Gastrocnemius medialis (tissue), 4 donors: ENCODE measurements at regions of chr15 and their contacts with region 1.

Region 1: DNA sequence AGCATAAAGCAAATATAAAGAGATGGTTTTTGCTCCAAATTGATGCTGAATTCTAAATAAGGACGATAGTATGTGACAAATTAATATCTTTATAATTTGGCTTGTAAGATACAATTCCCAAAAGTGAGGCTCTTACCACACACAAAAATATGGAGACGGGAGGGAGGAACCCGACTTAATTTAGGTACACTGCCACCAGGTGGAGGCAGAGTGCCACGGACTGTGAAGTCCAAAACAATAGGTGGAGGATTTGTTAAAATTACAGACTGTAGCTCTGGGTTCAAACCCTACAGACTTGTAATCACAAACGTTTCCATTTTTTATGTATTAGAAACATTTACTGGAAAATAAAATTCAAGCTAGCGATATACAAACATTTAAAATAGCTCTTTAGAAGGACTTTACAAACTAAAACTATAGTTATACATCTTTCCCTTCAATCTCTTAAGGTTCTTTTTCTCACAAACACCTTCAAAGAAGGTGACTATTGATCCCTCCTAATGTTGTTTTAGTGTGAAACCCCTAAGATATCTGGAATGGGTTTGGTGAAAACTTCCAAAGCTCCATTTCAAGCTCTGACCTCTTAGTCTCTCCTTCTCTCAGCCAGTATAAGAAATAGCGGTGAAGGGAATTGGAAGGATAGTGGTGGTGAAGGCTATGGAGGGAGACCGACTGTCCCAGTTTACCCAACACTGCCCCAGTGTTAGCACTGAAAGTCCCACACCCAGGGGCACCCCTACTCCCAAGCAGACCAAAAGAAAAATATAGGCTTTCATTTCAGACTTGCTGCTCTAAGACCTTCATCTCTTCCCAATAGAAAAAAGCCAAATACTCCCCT is 89.7 kb downstream of the AQP9 start:
- DNase-seq: peak; percentile 63 to 77
- ATAC-seq: peak; percentile 46 to 59
- H3K4me3 ChIP-seq: no peak overlapping the region
- H3K27ac ChIP-seq: peak overlapping the region; percentile 85 to 92 (median 86)
- H3K4me1 ChIP-seq: peaks cover 27 to 37% of the 10 kb centered on the region in 2 donors
- H3K27me3 ChIP-seq: no peaks in the 10 kb centered on the region
- CTCF ChIP-seq: peak; percentile 78 to 95 (median 87)
- POLR2A ChIP-seq: no peak

Region 2: GRCh38 chr15:58260911-58261267 is 33.0 kb after region 1 on chr15:
- in situ Hi-C with region 1: no loop called
- intact Hi-C with region 1: loop called (anchors 1 kb)
- DNase-seq: peak; percentile 74 to 89
- ATAC-seq: peak; percentile 81 to 82
- H3K4me3 ChIP-seq: no peak overlapping the region
- H3K27ac ChIP-seq: peak overlapping the region; percentile 90 to 96 (median 94)
- H3K4me1 ChIP-seq: peaks cover 40 to 48% of the 10 kb centered on the region in 2 donors
- H3K27me3 ChIP-seq: no peaks in the 10 kb centered on the region
- CTCF ChIP-seq: peak in 1 of 5 experiments; percentile 0
- POLR2A ChIP-seq: no peak

Region 3: GRCh38 chr15:58314593-58315216 is 86.8 kb after region 1 on chr15:
- in situ Hi-C with region 1: no loop called
- intact Hi-C with region 1: no loop called
- DNase-seq: no peak
- ATAC-seq: no peak
- H3K4me3 ChIP-seq: no peak overlapping the region
- H3K27ac ChIP-seq: no peak overlapping the region
- H3K4me1 ChIP-seq: peaks cover 0 to 11% of the 10 kb centered on the region in 2 donors
- H3K27me3 ChIP-seq: no peaks in the 10 kb centered on the region
- CTCF ChIP-seq: no peak
- POLR2A ChIP-seq: no peak

Region 4: DNA sequence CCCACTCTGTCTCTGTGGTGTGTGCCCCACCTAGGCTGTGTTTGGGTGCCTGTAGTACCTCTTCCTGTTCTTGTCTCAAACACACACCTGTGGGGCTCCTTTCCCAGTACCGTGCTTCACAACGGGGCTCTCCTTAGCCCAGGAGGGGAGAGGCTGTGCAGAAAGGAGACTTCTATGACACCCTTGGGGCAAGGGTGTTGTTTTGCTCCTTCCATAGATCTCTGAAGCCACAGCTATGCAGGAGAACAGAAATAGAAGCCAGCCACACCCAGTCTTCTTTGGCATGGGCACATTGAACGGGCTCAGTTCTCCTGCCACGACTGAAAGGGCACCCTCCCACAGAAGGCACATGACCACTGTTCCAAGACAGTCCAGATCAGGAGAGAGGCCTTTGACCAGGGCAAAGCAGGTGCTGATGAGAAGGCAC is 278.2 kb after region 1 on chr15:
- in situ Hi-C with region 1: no loop called
- intact Hi-C with region 1: loop called (anchors 5 kb)
- DNase-seq: peak; percentile 88 to 90
- ATAC-seq: peak; percentile 92 to 94
- H3K4me3 ChIP-seq: no peak overlapping the region
- H3K27ac ChIP-seq: peak overlapping the region; percentile 71 to 82 (median 80)
- H3K4me1 ChIP-seq: peaks cover 19 to 27% of the 10 kb centered on the region in 2 donors
- H3K27me3 ChIP-seq: no peaks in the 10 kb centered on the region
- CTCF ChIP-seq: no peak
- POLR2A ChIP-seq: peak in 1 of 2 donors; percentile 5

Region 5: DNA sequence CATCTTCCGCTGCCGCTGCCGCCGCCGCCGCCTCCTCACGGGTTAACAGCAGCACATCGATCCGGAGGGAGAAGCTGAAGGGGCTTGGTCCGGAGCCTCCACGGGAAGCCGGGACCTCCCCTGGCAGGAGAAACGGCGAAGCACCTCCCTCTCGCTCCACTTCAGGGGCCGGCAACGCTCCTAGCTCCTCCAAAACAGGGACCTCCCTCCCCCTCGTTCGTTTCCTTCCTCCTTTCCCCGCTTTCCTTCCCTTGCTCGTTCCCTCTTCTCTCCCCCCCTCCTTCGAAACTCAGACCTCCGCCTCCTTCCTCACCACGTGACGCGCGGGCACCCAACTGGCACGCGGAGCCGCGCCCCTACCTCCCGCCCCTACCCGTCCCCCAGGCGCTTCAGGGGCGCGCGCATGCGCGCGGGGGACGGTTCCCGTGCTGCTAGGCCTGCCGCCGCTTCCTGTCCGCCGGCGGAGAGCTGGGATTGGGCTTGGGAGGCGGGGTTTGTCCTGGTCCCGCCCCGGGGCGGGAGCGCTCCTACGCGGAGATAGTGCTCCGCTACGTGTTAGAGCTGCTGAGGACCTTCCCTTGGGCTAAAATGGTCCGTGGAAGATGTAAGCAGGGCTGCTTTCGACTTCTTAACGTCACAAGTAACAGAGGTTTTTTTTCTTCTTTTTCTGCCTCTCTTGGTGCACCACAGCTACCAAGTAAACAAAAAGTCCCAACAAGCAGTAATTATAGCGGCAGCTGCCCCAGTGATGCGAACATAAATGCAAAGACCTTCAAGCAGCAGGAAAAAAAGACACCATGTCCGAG is 521.8 kb after region 1 on chr15 and contains the start of gene ADAM10:
- in situ Hi-C with region 1: loop called in 3 of 4 experiments (anchors 10 to 25 kb)
- intact Hi-C with region 1: loop called (anchors 5 kb)
- DNase-seq: peak; percentile 98 to 99
- ATAC-seq: peak; percentile 94 to 95
- H3K4me3 ChIP-seq: peak within 1 kb of the TSS; percentile 75 to 98 (median 85)
- H3K27ac ChIP-seq: peak within 1 kb of the TSS; percentile 89 to 100 (median 96)
- H3K4me1 ChIP-seq: peaks cover 18 to 35% of the 10 kb centered on the region in 2 donors
- H3K27me3 ChIP-seq: no peaks in the 10 kb centered on the region
- CTCF ChIP-seq: peak in 1 of 5 experiments; percentile 10
- POLR2A ChIP-seq: peak; percentile 89 to 97
- total RNA-seq, gene ADAM10: 20.1 to 42.5 (median 33.4) TPM

Region 6: GRCh38 chr15:58933281-58934113 is 705.6 kb after region 1 on chr15 and contains the start of gene SLTM:
- in situ Hi-C with region 1: no loop called
- intact Hi-C with region 1: loop called (anchors 5 kb)
- DNase-seq: peak; percentile 85 to 94
- ATAC-seq: peak; percentile 87
- H3K4me3 ChIP-seq: peak within 1 kb of the TSS; percentile 73 to 95 (median 76)
- H3K27ac ChIP-seq: peak within 1 kb of the TSS; percentile 93 to 99 (median 96)
- H3K4me1 ChIP-seq: peaks cover 13 to 26% of the 10 kb centered on the region in 2 donors
- H3K27me3 ChIP-seq: no peaks in the 10 kb centered on the region
- CTCF ChIP-seq: peak in 4 of 5 experiments; percentile 13 to 43 (median 37)
- POLR2A ChIP-seq: peak; percentile 94 to 97
- total RNA-seq, gene SLTM: 46.5 to 76.2 (median 60.9) TPM